ENCODE measurements at regions of chr6 and their contacts with region 1.

Region 1: GRCh38 chr6:37018198-37019064 is 13.0 kb downstream of the FGD2 start:
- DNase-seq: peak; percentile 75
- ATAC-seq: peak; percentile 93
- H3K4me3 ChIP-seq: no peak overlapping the region
- H3K27ac ChIP-seq: peak overlapping the region; percentile 3; the same call in 1 of the 2 replicates
- H3K4me1 ChIP-seq: peaks cover 16 to 41% of the 10 kb centered on the region in 2 experiments
- H3K27me3 ChIP-seq: no peaks in the 10 kb centered on the region
- CTCF ChIP-seq: peak in 2 of 3 experiments; percentile 73 to 96; a peak in 4 of 6 replicates
- POLR2A ChIP-seq: no peak
- RAD21 ChIP-seq: no peak

Region 2: GRCh38 chr6:36874443-36875249 is 143.8 kb before region 1 on chr6 and contains the start of gene PPIL1:
- CTCF ChIA-PET with region 1: interaction called, 10 read pairs
- POLR2A ChIA-PET with region 1: no interaction called
- RAD21 ChIA-PET with region 1: interaction called in 1 of 2 experiments, 3 read pairs
- intact Hi-C with region 1: no loop called
- DNase-seq: peak; percentile 88
- ATAC-seq: peak; percentile 91
- H3K4me3 ChIP-seq: peak within 1 kb of the TSS; percentile 68 to 84
- H3K27ac ChIP-seq: peak within 1 kb of the TSS; percentile 93
- H3K4me1 ChIP-seq: peaks cover 8 to 17% of the 10 kb centered on the region in 2 experiments; a peak in 3 of 4 replicates
- H3K27me3 ChIP-seq: no peaks in the 10 kb centered on the region
- CTCF ChIP-seq: no peak
- POLR2A ChIP-seq: peak; percentile 30
- RAD21 ChIP-seq: no peak
- total RNA-seq, gene PPIL1: 42.0 TPM

Region 3: GRCh38 chr6:36897609-36898008 is 120.8 kb before region 1 on chr6:
- CTCF ChIA-PET with region 1: interaction called, 12 read pairs
- POLR2A ChIA-PET with region 1: no interaction called
- RAD21 ChIA-PET with region 1: interaction called in 1 of 2 experiments, 3 read pairs
- intact Hi-C with region 1: no loop called
- DNase-seq: no peak
- ATAC-seq: peak; percentile 90
- H3K4me3 ChIP-seq: no peak overlapping the region
- H3K27ac ChIP-seq: no peak overlapping the region
- H3K4me1 ChIP-seq: no peaks in the 10 kb centered on the region
- H3K27me3 ChIP-seq: no peaks in the 10 kb centered on the region
- CTCF ChIP-seq: peak; percentile 23 to 41 (median 38); a peak in 3 of 6 replicates
- POLR2A ChIP-seq: no peak
- RAD21 ChIP-seq: peak; percentile 56

Region 4: GRCh38 chr6:37029249-37029971 is 11.0 kb after region 1 on chr6:
- CTCF ChIA-PET with region 1: interaction called, 26 read pairs
- POLR2A ChIA-PET with region 1: no interaction called
- RAD21 ChIA-PET with region 1: no interaction called
- intact Hi-C with region 1: no loop called
- DNase-seq: peak; percentile 79
- ATAC-seq: peak; percentile 74
- H3K4me3 ChIP-seq: no peak overlapping the region
- H3K27ac ChIP-seq: no peak overlapping the region
- H3K4me1 ChIP-seq: peaks cover 16 to 40% of the 10 kb centered on the region in 2 experiments
- H3K27me3 ChIP-seq: no peaks in the 10 kb centered on the region
- CTCF ChIP-seq: peak in 2 of 3 experiments; percentile 70 to 80; a peak in 4 of 6 replicates
- POLR2A ChIP-seq: no peak
- RAD21 ChIP-seq: no peak

Region 5: DNA sequence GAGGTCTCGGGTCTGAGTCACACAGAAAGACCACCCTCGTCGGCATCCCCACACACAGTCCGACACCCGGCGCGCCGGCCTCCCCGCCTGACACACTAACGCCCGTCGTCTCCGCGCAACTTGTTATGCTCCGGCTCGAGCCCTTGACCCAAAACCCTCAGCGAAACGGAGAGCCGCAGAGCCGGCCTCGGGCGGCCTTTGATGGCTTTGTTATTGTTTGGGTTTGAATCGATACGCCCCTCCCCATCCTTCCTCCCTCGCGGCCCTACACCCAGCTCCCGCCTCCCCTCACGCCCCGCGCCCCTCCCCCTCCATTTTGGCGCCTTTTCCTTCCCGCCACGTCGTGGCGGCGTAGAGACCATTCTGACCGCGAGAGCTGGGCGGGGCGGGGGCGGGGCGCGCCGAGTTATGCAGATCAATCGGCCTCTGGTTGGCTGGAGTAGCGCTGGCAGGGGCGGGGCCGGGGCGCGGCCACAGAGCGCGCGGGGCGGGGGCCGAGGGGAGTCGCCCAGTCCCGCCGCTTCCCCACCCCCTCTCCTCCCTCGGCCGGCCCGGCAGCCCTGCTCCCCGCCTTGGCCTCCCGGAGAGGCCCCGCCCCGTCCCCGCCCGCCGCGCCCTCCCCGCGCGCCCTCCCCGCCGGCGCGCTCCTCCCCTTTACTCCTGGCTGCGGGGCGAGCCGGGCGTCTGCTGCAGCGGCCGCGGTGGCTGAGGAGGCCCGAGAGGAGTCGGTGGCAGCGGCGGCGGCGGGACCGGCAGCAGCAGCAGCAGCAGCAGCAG is 151.3 kb after region 1 on chr6 and contains the start of gene PIM1:
- CTCF ChIA-PET with region 1: interaction called, 59 read pairs
- POLR2A ChIA-PET with region 1: no interaction called
- RAD21 ChIA-PET with region 1: interaction called, 3 to 7 read pairs
- intact Hi-C with region 1: loop called (anchors 1 kb)
- DNase-seq: peak; percentile 87
- ATAC-seq: peak; percentile 87
- H3K4me3 ChIP-seq: peak within 1 kb of the TSS; percentile 77 to 81
- H3K27ac ChIP-seq: peak within 1 kb of the TSS; percentile 73; the same call in 1 of the 2 replicates
- H3K4me1 ChIP-seq: peaks cover 19 to 34% of the 10 kb centered on the region in 2 experiments
- H3K27me3 ChIP-seq: no peaks in the 10 kb centered on the region
- CTCF ChIP-seq: no peak
- POLR2A ChIP-seq: peak; percentile 25
- RAD21 ChIP-seq: no peak
- total RNA-seq, gene PIM1: 26.2 TPM

Region 6: DNA sequence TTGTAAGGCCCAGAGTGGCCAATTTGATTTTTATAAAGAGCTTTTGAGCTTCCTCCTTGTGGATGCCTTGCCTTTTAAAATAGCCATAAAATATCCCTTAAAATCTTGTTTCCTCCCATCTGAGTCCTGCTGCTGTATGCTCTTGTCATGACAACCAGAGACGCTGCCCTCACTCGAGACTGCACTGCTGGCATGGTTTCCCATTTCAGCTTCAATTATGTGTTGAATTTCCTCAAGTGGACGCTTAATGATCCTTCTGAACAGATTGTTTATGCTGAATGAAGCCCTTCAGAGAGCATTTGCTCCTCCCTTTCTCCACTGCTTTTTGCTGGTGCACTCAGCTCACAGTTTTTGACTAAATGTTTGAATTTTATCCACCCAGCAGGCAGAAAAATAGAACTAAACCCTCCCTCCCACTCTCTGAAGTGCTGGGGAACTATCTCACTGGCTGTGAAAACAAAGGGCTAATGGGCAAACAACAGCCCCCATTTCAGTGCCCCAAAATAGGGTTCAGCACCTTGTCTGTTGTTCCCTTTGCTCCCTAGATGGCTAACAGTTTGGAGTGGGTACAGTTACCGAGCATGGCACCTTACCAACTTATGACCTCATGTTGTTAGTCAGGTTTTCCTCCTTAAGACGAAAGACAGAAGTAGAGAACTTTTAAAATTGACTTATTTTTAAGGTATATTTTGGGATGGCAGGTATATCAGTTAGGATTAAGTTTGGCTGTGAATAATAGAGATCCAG is 289.8 kb after region 1 on chr6:
- CTCF ChIA-PET with region 1: no interaction called
- POLR2A ChIA-PET with region 1: no interaction called
- RAD21 ChIA-PET with region 1: no interaction called
- intact Hi-C with region 1: loop called (anchors 5 kb)
- DNase-seq: no peak
- ATAC-seq: no peak
- H3K4me3 ChIP-seq: no peak overlapping the region
- H3K27ac ChIP-seq: no peak overlapping the region
- H3K4me1 ChIP-seq: no peaks in the 10 kb centered on the region
- H3K27me3 ChIP-seq: no peaks in the 10 kb centered on the region
- CTCF ChIP-seq: no peak
- POLR2A ChIP-seq: no peak
- RAD21 ChIP-seq: no peak

Region 7: GRCh38 chr6:37566111-37566949 is 547.9 kb after region 1 on chr6:
- CTCF ChIA-PET with region 1: no interaction called
- POLR2A ChIA-PET with region 1: no interaction called
- RAD21 ChIA-PET with region 1: no interaction called
- intact Hi-C with region 1: no loop called
- DNase-seq: no peak
- ATAC-seq: peak; percentile 97
- H3K4me3 ChIP-seq: no peak overlapping the region
- H3K27ac ChIP-seq: no peak overlapping the region
- H3K4me1 ChIP-seq: peaks cover 0 to 7% of the 10 kb centered on the region in 2 experiments; a peak in 1 of 4 replicates
- H3K27me3 ChIP-seq: no peaks in the 10 kb centered on the region
- CTCF ChIP-seq: peak; percentile 84 to 94 (median 89)
- POLR2A ChIP-seq: no peak
- RAD21 ChIP-seq: peak; percentile 94

Measured in HCT116 (cell line).